Heart left ventricle (tissue), 16 donors: ENCODE measurements at regions of chr1 and their contacts with region 1.

Region 1: GRCh38 chr1:180631766-180632325 is at the start of gene XPR1:
- DNase-seq: peak; percentile 98 to 99 (median 98)
- ATAC-seq: peak; percentile 99 to 100 (median 99)
- H3K4me3 ChIP-seq: peak within 1 kb of the TSS; percentile 69 to 98 (median 87)
- H3K27ac ChIP-seq: peak within 1 kb of the TSS; percentile 77 to 97 (median 91)
- H3K4me1 ChIP-seq: peaks cover 0 to 42% (median 25%) of the 10 kb centered on the region in 12 donors
- H3K27me3 ChIP-seq: no peaks in the 10 kb centered on the region
- CTCF ChIP-seq: peak in 8 of 12 donors; percentile 10 to 51 (median 38)
- POLR2A ChIP-seq: peak; percentile 86 to 98
- total RNA-seq, gene XPR1: 55.4 to 163 (median 62.5) TPM

Region 2: GRCh38 chr1:180533266-180533987 is 98.4 kb before region 1 on chr1:
- intact Hi-C with region 1: loop called in 8 of 10 experiments (anchors 2 to 5 kb)
- DNase-seq: peak; percentile 61 to 79 (median 75)
- ATAC-seq: peak in 3 of 4 donors; percentile 73 to 84 (median 79)
- H3K4me3 ChIP-seq: no peak overlapping the region
- H3K27ac ChIP-seq: peak overlapping the region in 7 of 12 donors; percentile 5 to 40 (median 17)
- H3K4me1 ChIP-seq: peaks cover 0 to 29% (median 6%) of the 10 kb centered on the region in 12 donors
- H3K27me3 ChIP-seq: no peaks in the 10 kb centered on the region
- CTCF ChIP-seq: peak; percentile 78 to 93 (median 86)
- POLR2A ChIP-seq: no peak

Region 3: DNA sequence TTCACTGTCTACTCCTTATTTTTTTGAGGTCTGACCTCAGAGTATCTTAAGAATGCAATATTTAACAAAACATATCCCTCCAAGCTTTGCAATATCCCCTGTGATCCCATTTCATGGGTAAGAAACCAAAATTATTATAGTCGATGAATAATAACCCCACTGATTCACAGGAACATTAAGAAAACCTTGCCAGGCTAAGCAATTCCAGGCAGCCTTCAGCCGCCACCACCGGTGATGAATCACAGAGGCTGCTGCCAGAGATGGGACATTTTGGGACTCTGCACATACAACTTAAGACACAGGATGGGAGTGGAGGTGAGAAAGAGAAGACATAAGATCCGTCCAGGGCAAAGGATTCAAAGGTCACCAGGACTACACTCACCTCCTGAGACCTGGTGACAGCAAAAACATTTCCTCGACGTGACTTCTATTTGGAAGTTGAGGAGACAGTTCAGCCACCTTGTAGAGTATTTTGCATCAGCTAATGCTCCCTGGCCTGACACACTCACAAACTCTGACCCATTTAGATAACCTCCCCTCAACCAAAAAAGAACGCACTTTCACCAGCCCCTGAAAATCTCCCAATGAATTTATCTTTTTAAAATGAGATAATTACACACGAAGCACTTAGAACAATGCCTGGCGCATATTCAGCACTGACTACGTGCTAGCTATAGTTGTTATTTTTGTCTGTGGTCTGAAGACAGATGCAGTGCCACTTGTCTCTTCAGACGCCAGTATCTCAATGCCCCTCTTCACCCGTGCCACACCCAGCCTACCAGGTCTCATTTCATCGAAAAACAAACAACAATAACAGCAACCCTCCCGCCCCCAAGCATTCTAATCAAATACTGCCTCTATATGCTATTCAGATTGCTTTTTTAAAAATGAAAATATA is 90.9 kb before region 1 on chr1:
- intact Hi-C with region 1: loop called in 5 of 10 experiments (anchors 2 to 5 kb)
- DNase-seq: peak in 3 of 5 donors; percentile 37 to 66 (median 37)
- ATAC-seq: peak; percentile 68 to 70 (median 69)
- H3K4me3 ChIP-seq: no peak overlapping the region
- H3K27ac ChIP-seq: peak overlapping the region; percentile 68 to 89 (median 79)
- H3K4me1 ChIP-seq: peaks cover 3 to 51% (median 34%) of the 10 kb centered on the region in 12 donors
- H3K27me3 ChIP-seq: no peaks in the 10 kb centered on the region
- CTCF ChIP-seq: no peak
- POLR2A ChIP-seq: peak in 1 of 2 donors; percentile 15

Region 4: GRCh38 chr1:180563026-180563827 is 68.6 kb before region 1 on chr1:
- intact Hi-C with region 1: loop called in 1 of 10 experiments (anchors 10 kb)
- DNase-seq: peak in 2 of 5 donors; percentile 35 to 40
- ATAC-seq: peak; percentile 59 to 81 (median 77)
- H3K4me3 ChIP-seq: no peak overlapping the region
- H3K27ac ChIP-seq: peak overlapping the region; percentile 65 to 92 (median 82)
- H3K4me1 ChIP-seq: peaks cover 5 to 71% (median 39%) of the 10 kb centered on the region in 12 donors
- H3K27me3 ChIP-seq: no peaks in the 10 kb centered on the region
- CTCF ChIP-seq: no peak
- POLR2A ChIP-seq: no peak

Region 5: GRCh38 chr1:180594723-180595122 is 37.1 kb before region 1 on chr1:
- intact Hi-C with region 1: loop called in 1 of 10 experiments (anchors 1 kb)
- DNase-seq: no peak
- ATAC-seq: no peak
- H3K4me3 ChIP-seq: no peak overlapping the region
- H3K27ac ChIP-seq: no peak overlapping the region
- H3K4me1 ChIP-seq: peaks cover 0 to 19% (median 0%) of the 10 kb centered on the region in 12 donors
- H3K27me3 ChIP-seq: no peaks in the 10 kb centered on the region
- CTCF ChIP-seq: no peak
- POLR2A ChIP-seq: no peak